ENCODE measurements at regions of chr5 and their contacts with region 1.

Region 1: DNA sequence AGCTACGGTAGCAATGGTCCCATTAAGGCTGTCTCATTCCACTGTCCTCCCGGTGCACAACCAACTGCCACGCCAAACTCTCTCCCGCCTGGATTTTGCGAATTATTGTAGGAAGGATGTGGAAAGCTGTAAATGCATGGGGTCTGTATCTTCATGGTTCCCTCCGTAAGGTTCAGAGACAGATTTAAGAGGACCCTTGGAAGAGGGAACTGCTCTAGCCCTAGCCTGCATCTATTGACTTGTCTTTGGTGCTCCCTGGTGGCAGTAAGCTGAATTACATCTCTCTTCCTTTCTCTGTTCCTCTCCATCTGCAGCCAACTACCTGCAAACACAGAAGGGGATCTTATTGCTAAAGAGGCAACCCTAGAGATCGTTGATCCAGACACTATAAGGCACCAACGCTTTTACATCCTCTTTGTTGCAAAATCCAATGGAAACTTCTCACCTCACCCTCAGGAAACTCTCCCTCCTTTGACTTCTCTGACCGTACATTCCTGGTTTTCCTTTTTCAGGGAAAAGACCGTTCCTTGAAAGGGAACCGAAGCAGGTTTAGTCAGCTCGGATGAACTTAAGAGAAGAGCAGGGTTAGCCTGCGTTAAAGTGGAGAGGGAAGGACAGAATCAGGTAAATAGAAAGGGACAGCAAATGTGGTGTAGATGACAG is 11.9 kb downstream of the CAPSL start:
- DNase-seq: peak; percentile 28 to 84
- H3K4me3 ChIP-seq: no peak overlapping the region
- H3K27ac ChIP-seq: no peak overlapping the region
- H3K4me1 ChIP-seq: peaks cover 0 to 13% (median 6%) of the 10 kb centered on the region in 4 donors
- H3K27me3 ChIP-seq: peaks cover 0 to 53% (median 8%) of the 10 kb centered on the region in 3 donors
- CTCF ChIP-seq: peak in 5 of 7 experiments; percentile 76 to 86 (median 81)
- EP300 ChIP-seq: no peak
- POLR2A ChIP-seq: no peak

Region 2: GRCh38 chr5:34905564-34905963 is 1021.0 kb before region 1 on chr5:
- intact Hi-C with region 1: no loop called
- DNase-seq: peak in 1 of 2 donors; percentile 26
- H3K4me3 ChIP-seq: no peak overlapping the region
- H3K27ac ChIP-seq: no peak overlapping the region
- H3K4me1 ChIP-seq: no peaks in the 10 kb centered on the region
- H3K27me3 ChIP-seq: no peaks in the 10 kb centered on the region
- CTCF ChIP-seq: peak in 1 of 7 experiments; percentile 18
- EP300 ChIP-seq: no peak
- POLR2A ChIP-seq: no peak

Region 3: GRCh38 chr5:35089334-35090314 is 836.9 kb before region 1 on chr5:
- intact Hi-C with region 1: loop called (anchors 10 kb)
- DNase-seq: peak; percentile 66 to 82
- H3K4me3 ChIP-seq: no peak overlapping the region
- H3K27ac ChIP-seq: no peak overlapping the region
- H3K4me1 ChIP-seq: no peaks in the 10 kb centered on the region
- H3K27me3 ChIP-seq: no peaks in the 10 kb centered on the region
- CTCF ChIP-seq: peak in 5 of 7 experiments; percentile 24 to 77 (median 61)
- EP300 ChIP-seq: no peak
- POLR2A ChIP-seq: no peak

Region 4: DNA sequence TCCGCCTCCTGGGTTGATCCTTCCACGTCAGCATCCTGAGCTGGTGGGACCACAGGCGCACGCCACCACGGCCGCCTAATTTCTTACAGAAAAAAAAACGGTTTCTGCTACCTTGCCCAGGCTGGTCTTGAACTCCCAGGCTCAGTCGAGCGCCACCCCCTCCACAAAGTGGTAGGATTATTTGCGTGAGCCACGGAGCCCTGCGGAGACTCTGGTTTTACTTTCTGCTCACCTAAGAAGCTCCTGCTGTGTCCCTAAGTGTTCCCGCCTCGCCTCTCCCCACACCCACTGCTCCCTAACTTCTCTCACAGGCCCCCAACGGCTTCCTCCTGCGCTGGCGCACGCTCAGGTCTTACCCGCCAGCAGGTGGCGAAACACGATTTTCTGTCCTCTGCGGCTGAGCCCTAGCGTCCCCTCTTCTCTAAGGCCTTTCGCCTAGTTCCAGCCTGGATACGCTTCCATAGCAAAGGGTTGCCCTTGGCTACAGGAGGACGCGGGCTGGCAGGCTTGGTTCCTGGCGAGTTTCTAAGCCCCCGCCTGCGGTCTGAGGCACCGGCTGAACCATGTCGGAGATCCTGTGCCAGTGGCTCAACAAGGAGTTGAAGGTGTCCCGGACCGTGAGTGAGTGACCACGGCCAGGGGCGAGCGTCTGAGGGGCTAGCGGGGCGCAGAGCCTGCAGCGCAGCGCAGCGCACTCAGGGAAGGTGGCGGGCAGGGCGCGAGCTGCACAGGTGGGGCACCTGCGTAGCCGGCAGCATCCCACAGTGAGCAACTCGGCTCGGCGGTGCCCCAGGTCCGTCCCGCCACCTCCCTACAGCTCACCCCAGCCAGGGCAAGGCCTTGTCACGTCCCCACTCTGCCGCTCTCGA is 308.9 kb before region 1 on chr5 and contains the start of gene SPEF2:
- intact Hi-C with region 1: loop called (anchors 5 kb)
- DNase-seq: peak; percentile 82 to 97
- H3K4me3 ChIP-seq: peak within 1 kb of the TSS; percentile 61 to 95 (median 74)
- H3K27ac ChIP-seq: peak within 1 kb of the TSS; percentile 10 to 66 (median 54)
- H3K4me1 ChIP-seq: peaks cover 0 to 17% (median 11%) of the 10 kb centered on the region in 4 donors
- H3K27me3 ChIP-seq: no peaks in the 10 kb centered on the region
- CTCF ChIP-seq: peak in 5 of 7 experiments; percentile 50 to 79 (median 69)
- EP300 ChIP-seq: no peak
- POLR2A ChIP-seq: no peak
- total RNA-seq, gene SPEF2: 2.3 to 25.4 (median 10.3) TPM

Region 5: DNA sequence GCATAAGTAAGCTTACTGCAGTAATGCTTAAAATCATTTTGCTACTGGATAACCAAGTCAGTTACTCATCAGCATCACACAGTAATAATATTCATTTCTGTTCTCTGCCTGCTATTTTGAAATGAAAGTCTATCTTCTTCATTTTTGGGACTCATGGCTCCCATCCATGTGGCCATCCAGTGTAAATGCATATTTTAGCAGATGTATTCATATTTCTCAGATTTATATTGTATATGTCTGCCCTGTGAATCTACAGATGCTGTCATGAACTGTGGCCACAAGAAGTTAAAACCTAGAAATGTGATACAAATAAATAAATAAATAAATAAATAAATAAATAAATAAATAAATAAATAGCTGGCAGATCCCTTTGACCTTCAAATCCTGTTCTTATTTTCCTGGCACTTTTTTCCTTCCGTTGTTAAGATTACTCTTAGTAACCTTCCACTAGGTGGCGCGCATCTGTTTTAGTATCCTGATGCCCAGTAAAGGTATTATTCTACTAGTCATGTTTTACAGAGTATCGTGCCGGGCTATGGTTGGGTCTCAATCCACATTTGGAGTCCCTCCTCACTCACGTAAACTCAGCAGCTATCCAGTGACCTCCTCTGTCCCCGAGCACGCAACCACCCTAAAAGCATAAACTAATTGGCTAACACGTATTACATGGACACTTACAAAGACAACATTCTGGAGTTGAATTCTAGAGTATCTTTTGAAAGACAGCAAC is 149.0 kb before region 1 on chr5:
- intact Hi-C with region 1: loop called (anchors 5 kb)
- DNase-seq: peak; percentile 74 to 88
- H3K4me3 ChIP-seq: no peak overlapping the region
- H3K27ac ChIP-seq: no peak overlapping the region
- H3K4me1 ChIP-seq: peaks cover 0 to 10% (median 4%) of the 10 kb centered on the region in 4 donors
- H3K27me3 ChIP-seq: no peaks in the 10 kb centered on the region
- CTCF ChIP-seq: peak in 5 of 7 experiments; percentile 6 to 56 (median 36)
- EP300 ChIP-seq: no peak
- POLR2A ChIP-seq: no peak

Region 6: GRCh38 chr5:36444582-36445418 is 518.3 kb after region 1 on chr5:
- intact Hi-C with region 1: no loop called
- DNase-seq: peak; percentile 41 to 76
- H3K4me3 ChIP-seq: no peak overlapping the region
- H3K27ac ChIP-seq: peak overlapping the region in 4 of 5 donors; percentile 25 to 66 (median 48)
- H3K4me1 ChIP-seq: peaks cover 17 to 33% (median 21%) of the 10 kb centered on the region in 4 donors
- H3K27me3 ChIP-seq: no peaks in the 10 kb centered on the region
- CTCF ChIP-seq: no peak
- EP300 ChIP-seq: no peak
- POLR2A ChIP-seq: no peak